Motor neuron (in vitro differentiated cells): ENCODE measurements at regions of chr3 and their contacts with region 1.

Region 1: GRCh38 chr3:99753268-99753975 is 64.2 kb upstream of the CMSS1 start:
- ATAC-seq: peak; percentile 76 to 92 (median 80)
- H3K4me3 ChIP-seq: no peak overlapping the region
- H3K27ac ChIP-seq: no peak overlapping the region
- H3K4me1 ChIP-seq: no peaks in the 10 kb centered on the region

Region 2: GRCh38 chr3:99499235-99500158 is 253.9 kb before region 1 on chr3:
- in situ Hi-C with region 1: loop called in 1 of 9 experiments (anchors 25 kb)
- ATAC-seq: peak in 4 of 8 experiments; percentile 52 to 87 (median 86)
- H3K4me3 ChIP-seq: no peak overlapping the region
- H3K27ac ChIP-seq: no peak overlapping the region
- H3K4me1 ChIP-seq: no peaks in the 10 kb centered on the region